Mammary epithelial cell (primary cell): ENCODE measurements at regions of chr18 and their contacts with region 1.

Region 1: DNA sequence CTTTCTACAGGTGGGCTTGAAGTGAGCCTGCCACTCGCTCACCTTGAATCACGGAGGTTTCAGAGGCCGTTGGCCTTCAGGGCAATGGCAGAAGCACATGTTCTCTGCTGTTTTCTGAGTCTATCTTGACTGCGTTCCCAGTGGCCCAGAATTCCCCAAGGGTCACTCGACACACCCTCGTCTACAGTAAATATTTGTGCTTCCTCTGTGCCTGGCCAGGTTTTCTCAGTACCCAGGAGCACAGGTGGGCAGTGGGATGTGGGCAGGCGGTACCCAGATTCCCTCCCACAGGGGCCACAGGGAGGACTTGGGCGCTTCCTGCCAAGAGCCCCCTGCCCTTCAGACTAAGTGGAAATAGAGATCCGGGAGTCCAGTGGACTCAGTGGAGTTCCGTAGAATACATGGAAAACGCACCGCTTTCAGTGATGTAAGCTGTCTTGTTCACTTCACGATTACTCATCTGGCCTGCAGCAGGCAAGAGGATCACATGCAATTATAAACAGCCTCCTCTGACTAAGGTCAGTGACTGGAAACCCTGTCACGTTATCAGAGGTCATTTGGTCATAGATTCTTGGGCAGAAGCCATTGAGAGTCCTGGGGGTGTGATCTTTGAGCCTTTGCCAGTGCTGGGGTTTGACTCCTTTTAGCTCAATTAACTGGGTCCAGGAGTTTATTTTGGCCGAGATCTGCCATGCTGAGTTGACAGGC is 179.8 kb downstream of the NEDD4L start:
- DNase-seq: peak; percentile 96
- H3K4me3 ChIP-seq: peak overlapping the region; percentile 71 to 96 (median 93)
- H3K27ac ChIP-seq: peak overlapping the region; percentile 99
- H3K4me1 ChIP-seq: peaks cover 45% of the 10 kb centered on the region
- H3K27me3 ChIP-seq: no peaks in the 10 kb centered on the region
- CTCF ChIP-seq: no peak

Region 2: GRCh38 chr18:58186258-58186948 is 37.5 kb before region 1 on chr18:
- CTCF ChIA-PET with region 1: no interaction called
- dilution Hi-C with region 1: loop called (anchors 5 kb)
- in situ Hi-C with region 1: no loop called
- intact Hi-C with region 1: loop called (anchors 1 kb)
- DNase-seq: peak; percentile 92
- H3K4me3 ChIP-seq: no peak overlapping the region
- H3K27ac ChIP-seq: peak overlapping the region; percentile 79
- H3K4me1 ChIP-seq: peaks cover 36% of the 10 kb centered on the region
- H3K27me3 ChIP-seq: no peaks in the 10 kb centered on the region
- CTCF ChIP-seq: no peak

Region 3: GRCh38 chr18:58195278-58195765 is 28.5 kb before region 1 on chr18:
- CTCF ChIA-PET with region 1: interaction called, 3 read pairs
- dilution Hi-C with region 1: no loop called
- in situ Hi-C with region 1: no loop called
- intact Hi-C with region 1: loop called (anchors 1 kb)
- DNase-seq: peak; percentile 73
- H3K4me3 ChIP-seq: peak overlapping the region; percentile 62 to 98 (median 86)
- H3K27ac ChIP-seq: peak overlapping the region; percentile 93
- H3K4me1 ChIP-seq: peaks cover 34% of the 10 kb centered on the region
- H3K27me3 ChIP-seq: no peaks in the 10 kb centered on the region
- CTCF ChIP-seq: no peak

Region 4: DNA sequence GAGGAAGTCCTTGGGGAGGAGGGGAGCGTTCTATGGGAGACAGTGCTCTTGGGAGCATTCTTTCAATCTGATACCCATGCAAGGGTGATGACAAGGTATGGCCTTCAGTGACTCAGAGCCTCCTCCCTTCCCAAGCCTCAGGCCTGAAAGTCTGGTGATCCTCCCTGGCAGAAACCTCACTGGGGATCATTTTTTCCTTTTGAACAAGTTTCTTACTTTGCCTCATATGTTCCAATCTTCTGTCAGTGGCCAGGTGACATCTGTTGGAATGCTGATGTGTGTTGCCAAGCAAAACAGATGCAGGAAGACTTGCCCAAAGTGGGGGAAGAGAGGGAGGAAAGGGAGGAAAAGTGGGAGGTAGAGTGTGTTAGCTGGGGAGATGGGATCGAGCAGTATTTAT is 45.0 kb after region 1 on chr18:
- CTCF ChIA-PET with region 1: no interaction called
- dilution Hi-C with region 1: no loop called
- in situ Hi-C with region 1: no loop called
- intact Hi-C with region 1: loop called (anchors 1 kb)
- DNase-seq: peak; percentile 95
- H3K4me3 ChIP-seq: no peak overlapping the region
- H3K27ac ChIP-seq: peak overlapping the region; percentile 95
- H3K4me1 ChIP-seq: peaks cover 58% of the 10 kb centered on the region
- H3K27me3 ChIP-seq: no peaks in the 10 kb centered on the region
- CTCF ChIP-seq: no peak

Region 5: DNA sequence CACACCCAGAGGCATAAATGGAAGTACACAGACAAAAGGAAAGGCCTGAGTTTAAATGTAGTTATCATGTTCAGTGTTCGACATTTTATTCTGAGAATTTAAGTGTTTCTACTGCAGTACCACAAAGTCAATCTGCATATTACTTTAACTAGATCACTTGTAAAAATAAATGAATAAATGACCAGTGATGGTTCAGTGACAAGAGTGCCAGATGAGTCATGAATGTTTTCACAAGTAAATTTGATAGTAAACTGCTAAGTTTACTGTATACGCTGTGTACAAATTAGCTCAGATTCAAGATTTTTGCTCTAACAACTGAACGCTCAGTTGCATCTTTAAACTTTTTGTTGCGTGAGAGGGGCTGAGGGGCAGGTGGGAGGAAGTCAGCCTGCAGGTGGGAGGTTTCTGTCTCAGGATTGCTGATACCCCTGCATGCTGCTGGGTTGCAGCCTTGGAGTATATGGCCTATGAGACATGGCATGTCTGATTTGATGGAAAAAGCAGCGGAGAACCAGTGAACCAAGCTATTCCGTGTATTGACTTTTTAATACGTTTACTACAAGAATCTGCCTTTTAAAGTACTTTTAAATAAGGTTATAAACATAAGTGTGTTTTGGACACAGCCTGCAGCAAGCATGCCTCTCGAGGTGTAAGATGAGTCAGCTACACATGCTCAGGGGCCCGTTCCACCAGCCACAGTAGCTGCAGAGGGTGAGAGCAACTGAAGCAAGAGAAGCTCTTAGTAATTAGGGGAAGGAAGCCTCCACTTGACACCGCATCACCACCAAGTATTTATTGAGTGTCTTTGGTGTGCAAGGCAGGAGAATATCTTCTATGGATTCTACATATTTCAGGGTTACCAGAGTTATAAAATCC is 65.3 kb after region 1 on chr18:
- CTCF ChIA-PET with region 1: no interaction called
- dilution Hi-C with region 1: loop called (anchors 5 kb)
- in situ Hi-C with region 1: no loop called
- intact Hi-C with region 1: no loop called
- DNase-seq: peak; percentile 61
- H3K4me3 ChIP-seq: no peak overlapping the region
- H3K27ac ChIP-seq: peak overlapping the region; percentile 30
- H3K4me1 ChIP-seq: peaks cover 58% of the 10 kb centered on the region
- H3K27me3 ChIP-seq: no peaks in the 10 kb centered on the region
- CTCF ChIP-seq: no peak

Region 6: GRCh38 chr18:58321986-58322385 is 98.1 kb after region 1 on chr18:
- CTCF ChIA-PET with region 1: interaction called, 5 read pairs
- dilution Hi-C with region 1: no loop called
- in situ Hi-C with region 1: no loop called
- intact Hi-C with region 1: loop called (anchors 1 kb)
- DNase-seq: peak; percentile 86
- H3K4me3 ChIP-seq: no peak overlapping the region
- H3K27ac ChIP-seq: peak overlapping the region; percentile 83
- H3K4me1 ChIP-seq: peaks cover 14% of the 10 kb centered on the region
- H3K27me3 ChIP-seq: no peaks in the 10 kb centered on the region
- CTCF ChIP-seq: peak; percentile 65 to 68

Region 7: DNA sequence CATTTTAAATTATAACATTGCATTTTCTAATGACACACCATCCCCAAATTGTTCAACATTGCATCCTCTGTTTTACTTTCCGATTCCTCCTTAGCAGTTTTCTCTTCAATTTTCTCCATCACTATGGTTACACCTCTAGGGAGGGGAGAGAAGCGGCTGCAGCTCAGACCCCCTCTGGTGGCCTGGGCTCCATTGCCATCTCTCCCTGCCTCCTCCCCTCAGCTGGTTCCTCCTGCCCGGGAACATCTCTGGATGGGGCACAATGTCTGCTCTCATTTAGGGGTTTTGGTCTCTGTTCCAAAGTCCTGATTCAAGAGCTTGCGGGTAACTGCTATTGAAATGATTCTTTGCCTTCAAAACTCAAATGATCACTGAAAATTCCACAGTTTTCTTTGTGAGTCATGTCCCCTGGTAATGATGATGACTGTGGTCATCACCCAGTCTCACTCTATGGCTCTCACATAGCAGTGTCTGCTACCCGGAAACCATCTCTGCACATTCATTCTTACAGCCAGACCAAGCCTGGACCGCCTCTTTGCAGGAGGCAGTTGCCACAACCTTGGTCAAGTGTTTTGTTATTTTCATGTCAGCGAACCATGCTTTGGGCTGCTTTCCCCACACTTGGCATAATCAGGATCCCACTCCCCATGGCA is 141.1 kb after region 1 on chr18:
- CTCF ChIA-PET with region 1: no interaction called
- dilution Hi-C with region 1: no loop called
- in situ Hi-C with region 1: no loop called
- intact Hi-C with region 1: no loop called
- DNase-seq: peak; percentile 66
- H3K4me3 ChIP-seq: no peak overlapping the region
- H3K27ac ChIP-seq: peak overlapping the region; percentile 47
- H3K4me1 ChIP-seq: peaks cover 31% of the 10 kb centered on the region
- H3K27me3 ChIP-seq: no peaks in the 10 kb centered on the region
- CTCF ChIP-seq: no peak